ENCODE measurements at regions of chr1 and their contacts with region 1.

Region 1: GRCh38 chr1:181936768-181937581 is 124.5 kb downstream of the ZNF648 start:
- H3K4me3 ChIP-seq: peak overlapping the region; percentile 18; the same call in 1 of the 2 replicates
- H3K27ac ChIP-seq: no peak overlapping the region
- H3K4me1 ChIP-seq: no peaks in the 10 kb centered on the region
- CTCF ChIP-seq: peak; percentile 67; the same call in 1 of the 2 replicates

Region 2: GRCh38 chr1:181469829-181470228 is 467.1 kb before region 1 on chr1:
- CTCF ChIA-PET with region 1: interaction called, 150 read pairs
- POLR2A ChIA-PET with region 1: no interaction called
- H3K4me3 ChIP-seq: no peak overlapping the region
- H3K27ac ChIP-seq: no peak overlapping the region
- H3K4me1 ChIP-seq: no peaks in the 10 kb centered on the region
- CTCF ChIP-seq: no peak

Region 3: GRCh38 chr1:181712711-181713110 is 224.3 kb before region 1 on chr1:
- CTCF ChIA-PET with region 1: no interaction called
- POLR2A ChIA-PET with region 1: no interaction called
- H3K4me3 ChIP-seq: no peak overlapping the region
- H3K27ac ChIP-seq: no peak overlapping the region
- H3K4me1 ChIP-seq: peaks cover 6% of the 10 kb centered on the region; the same call in 1 of the 2 replicates
- CTCF ChIP-seq: no peak

Region 4: DNA sequence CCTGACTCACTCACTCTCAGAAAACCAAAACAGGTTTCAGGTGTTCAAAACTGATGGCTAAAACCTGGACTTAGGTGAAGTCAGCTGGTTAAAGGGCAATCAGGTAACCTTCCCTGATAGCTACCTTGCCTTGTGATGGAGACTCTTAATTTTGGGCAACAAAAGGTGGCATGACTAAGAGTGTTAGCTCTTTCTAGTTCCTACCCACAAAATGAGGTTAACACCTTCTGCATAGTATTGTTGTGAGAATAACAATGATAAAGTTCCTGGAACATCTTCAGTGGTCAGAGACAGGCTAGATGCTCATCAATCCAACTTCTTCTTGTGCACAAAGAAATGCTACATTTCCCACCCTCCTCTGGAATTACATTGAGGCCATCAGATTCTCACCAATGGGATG is 90.3 kb before region 1 on chr1:
- CTCF ChIA-PET with region 1: no interaction called
- POLR2A ChIA-PET with region 1: no interaction called
- H3K4me3 ChIP-seq: no peak overlapping the region
- H3K27ac ChIP-seq: no peak overlapping the region
- H3K4me1 ChIP-seq: no peaks in the 10 kb centered on the region
- CTCF ChIP-seq: no peak

Region 5: GRCh38 chr1:181910905-181911304 is 26.1 kb before region 1 on chr1:
- CTCF ChIA-PET with region 1: interaction called, 10 read pairs
- POLR2A ChIA-PET with region 1: no interaction called
- H3K4me3 ChIP-seq: no peak overlapping the region
- H3K27ac ChIP-seq: no peak overlapping the region
- H3K4me1 ChIP-seq: no peaks in the 10 kb centered on the region
- CTCF ChIP-seq: no peak

Measured in HEK293 (cell line).